GM23248 (cell line): ENCODE measurements at regions of chr16 and their contacts with region 1.

Region 1: DNA sequence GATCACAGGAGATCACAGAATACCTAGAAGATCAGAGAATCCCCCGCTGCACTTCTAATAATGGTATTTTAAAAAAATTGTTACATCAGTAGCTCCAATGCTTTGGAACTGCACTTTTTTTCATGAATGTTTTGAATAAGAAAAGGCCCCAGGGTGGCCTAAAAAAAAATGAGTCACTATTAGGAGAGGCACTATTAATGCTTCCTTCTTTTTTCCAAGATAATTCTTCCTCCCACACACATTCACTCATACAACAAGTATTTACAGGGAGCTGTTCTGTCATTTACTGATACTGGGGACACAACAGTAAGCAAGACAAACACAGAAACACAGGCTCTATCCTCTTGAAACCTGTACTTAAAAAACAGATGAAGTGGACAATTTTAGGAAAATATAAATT is 675 bp upstream of the PDZD9 start:
- DNase-seq: peak; percentile 88
- H3K4me3 ChIP-seq: peak overlapping the region; percentile 65
- H3K27ac ChIP-seq: peak overlapping the region; percentile 51
- H3K4me1 ChIP-seq: peaks cover 9% of the 10 kb centered on the region
- H3K27me3 ChIP-seq: no peaks in the 10 kb centered on the region

Region 2: DNA sequence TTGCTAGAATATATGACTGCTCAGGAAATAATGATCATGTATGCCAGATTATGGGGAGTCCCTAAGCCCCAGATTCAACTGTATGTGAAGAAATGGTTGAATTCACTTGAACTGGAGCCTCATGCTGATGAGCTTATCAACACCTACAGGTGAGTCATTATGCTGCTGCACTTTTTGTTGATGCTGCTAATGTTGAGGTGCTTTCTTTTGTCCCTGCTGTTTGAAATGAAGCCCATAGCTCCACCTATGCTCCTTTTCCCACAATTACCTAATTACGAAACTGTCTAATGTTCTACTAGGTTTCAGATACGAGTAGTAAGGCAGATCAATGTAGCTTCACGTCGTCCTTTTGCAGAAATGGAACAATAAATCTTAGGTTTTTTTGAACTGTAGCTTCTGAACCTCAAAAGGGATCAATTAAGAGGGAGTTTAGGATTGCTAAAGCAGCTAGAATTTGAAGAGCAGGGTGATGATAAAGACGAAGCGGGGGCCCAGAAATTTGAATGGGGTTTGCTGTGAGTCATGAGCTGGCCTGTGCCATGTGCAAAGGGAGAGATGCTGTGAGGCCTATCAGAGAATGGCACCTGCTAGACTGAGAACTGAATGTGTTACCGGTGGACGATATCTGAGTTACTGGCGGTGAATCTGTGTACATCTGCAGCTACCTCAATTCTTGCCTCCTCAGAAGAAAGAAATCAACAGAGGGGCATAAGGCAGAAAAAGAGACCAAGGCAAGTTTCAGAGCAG is 54.5 kb before region 1 on chr16:
- in situ Hi-C with region 1: no loop called
- DNase-seq: no peak
- H3K4me3 ChIP-seq: no peak overlapping the region
- H3K27ac ChIP-seq: no peak overlapping the region
- H3K4me1 ChIP-seq: peaks cover 4% of the 10 kb centered on the region; the same call in 1 of the 2 replicates
- H3K27me3 ChIP-seq: no peaks in the 10 kb centered on the region

Region 3: DNA sequence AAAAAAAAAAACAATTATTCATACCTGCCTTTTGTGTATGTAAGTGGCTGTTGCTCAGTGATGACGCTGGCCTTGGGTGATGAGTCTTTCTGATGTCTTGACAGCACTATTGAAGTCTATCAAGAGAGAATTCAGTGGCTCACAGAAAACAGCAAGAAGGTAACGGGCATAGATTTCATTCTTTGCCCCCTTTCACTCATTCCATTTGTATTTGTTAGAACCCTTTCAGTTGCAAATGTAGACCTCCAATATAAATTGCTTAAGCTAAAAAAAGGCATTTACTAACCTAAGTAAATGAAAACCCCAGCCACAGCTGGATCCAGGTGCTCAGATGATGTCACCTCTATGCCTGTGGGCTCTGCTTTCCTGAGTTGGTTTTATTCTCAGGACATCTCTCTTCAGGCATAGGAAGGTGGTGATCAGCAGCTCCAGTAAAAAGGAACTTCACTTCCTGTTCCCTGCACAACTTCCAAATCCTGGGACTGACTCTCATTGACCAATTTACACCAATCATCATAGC is 101.8 kb after region 1 on chr16:
- in situ Hi-C with region 1: loop called (anchors 5 kb)
- DNase-seq: no peak
- H3K4me3 ChIP-seq: no peak overlapping the region
- H3K27ac ChIP-seq: no peak overlapping the region
- H3K4me1 ChIP-seq: no peaks in the 10 kb centered on the region; the same call in 1 of the 2 replicates
- H3K27me3 ChIP-seq: peaks cover 6% of the 10 kb centered on the region; the same call in 1 of the 2 replicates

Region 4: GRCh38 chr16:22183901-22184614 is 182.5 kb after region 1 on chr16:
- in situ Hi-C with region 1: loop called (anchors 5 kb)
- DNase-seq: no peak
- H3K4me3 ChIP-seq: no peak overlapping the region
- H3K27ac ChIP-seq: no peak overlapping the region
- H3K4me1 ChIP-seq: 0 out of 2 replicates have a peak, but pooled peaks cover under 1% of the 10 kb centered on the region
- H3K27me3 ChIP-seq: no peaks in the 10 kb centered on the region; the same call in 1 of the 2 replicates